ENCODE measurements at regions of chr18 and their contacts with region 1.

Region 1: DNA sequence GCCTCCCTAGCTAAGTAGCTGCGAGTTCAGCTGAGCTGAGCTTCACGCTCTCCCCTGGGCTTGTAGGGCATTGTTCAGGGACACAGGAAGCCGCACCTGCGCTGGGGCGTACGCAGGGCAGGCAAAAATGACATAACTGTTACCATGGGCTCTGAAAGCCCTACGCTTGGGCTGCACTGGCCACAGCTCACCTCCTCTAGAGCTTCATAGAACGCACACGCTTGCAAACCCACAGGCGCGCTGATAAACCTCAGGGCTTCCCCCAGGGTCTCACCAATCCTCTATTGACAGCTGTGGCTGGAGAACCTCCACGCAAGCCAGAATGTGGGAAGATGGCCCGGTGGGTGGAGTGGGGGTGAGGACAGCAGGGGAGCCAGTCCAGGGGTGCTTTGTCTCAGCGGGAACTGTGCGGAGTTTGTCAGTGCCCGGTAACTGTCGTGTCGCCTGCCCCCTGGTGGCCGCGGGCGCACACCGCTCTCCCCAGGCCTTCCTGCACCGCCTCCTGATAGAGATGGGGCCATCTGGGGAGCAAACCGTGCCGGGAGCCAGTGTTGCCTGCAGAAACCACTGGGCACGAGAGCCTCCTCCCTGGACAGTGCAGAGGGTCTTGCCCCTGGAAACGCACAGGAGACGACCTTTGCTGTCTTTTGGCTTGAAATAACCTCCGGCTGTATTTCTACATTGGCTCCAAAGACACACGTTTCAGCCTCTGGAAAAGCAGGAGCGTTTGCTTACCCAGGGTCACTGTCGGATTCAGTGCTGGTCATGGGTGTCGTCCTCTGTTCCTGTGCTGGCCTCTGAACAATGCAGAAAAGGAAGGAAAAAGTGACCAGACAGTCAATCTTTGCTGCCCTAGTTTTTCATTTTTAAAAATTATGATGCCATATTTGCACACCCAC is 17.0 kb upstream of the CIDEA start:
- DNase-seq: no peak
- H3K4me3 ChIP-seq: no peak overlapping the region
- CTCF ChIP-seq: peak; percentile 97

Region 2: DNA sequence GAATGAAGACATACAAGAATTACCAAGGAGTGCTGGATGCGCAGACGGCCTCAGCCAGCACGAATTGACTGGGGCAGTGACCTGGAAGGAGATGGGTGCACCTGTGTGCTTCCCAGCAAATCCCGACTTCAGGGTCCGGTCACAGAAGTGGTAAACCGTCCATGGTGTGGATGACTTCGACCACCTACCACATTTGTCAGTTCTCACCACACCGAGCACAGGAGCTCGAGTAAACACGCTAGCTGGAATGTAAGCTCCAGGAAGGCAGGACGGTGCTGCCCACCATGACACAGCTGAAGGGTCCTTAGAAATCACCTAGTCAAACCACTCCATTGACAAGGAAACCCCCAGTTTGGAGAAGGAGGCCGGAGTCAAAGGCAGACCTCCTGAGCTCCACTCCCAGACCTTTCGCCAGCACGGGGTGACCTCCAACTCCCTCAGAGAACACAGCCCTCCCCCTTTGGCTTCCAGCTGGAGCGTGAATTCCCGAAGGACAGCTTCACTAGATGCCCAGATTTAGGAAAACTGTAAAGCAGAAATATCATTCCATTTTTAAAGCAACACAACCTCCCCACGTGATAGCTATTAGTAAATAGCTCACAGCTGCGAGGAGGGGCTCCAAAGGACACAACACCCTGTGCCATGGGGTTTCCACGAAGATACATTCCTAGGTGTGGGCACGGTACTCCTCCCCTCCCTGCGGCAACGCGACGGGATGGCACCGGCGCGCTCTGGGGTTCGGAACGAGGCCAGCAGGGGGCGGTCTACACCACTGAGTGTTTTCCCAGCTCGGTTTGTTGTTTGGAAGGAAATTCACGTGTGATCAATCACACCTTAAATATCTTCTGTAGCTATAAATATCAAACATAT is 582.2 kb before region 1 on chr18:
- CTCF ChIA-PET with region 1: interaction called, 10 read pairs
- POLR2A ChIA-PET with region 1: no interaction called
- DNase-seq: no peak
- H3K4me3 ChIP-seq: no peak overlapping the region
- CTCF ChIP-seq: peak; percentile 80

Region 3: DNA sequence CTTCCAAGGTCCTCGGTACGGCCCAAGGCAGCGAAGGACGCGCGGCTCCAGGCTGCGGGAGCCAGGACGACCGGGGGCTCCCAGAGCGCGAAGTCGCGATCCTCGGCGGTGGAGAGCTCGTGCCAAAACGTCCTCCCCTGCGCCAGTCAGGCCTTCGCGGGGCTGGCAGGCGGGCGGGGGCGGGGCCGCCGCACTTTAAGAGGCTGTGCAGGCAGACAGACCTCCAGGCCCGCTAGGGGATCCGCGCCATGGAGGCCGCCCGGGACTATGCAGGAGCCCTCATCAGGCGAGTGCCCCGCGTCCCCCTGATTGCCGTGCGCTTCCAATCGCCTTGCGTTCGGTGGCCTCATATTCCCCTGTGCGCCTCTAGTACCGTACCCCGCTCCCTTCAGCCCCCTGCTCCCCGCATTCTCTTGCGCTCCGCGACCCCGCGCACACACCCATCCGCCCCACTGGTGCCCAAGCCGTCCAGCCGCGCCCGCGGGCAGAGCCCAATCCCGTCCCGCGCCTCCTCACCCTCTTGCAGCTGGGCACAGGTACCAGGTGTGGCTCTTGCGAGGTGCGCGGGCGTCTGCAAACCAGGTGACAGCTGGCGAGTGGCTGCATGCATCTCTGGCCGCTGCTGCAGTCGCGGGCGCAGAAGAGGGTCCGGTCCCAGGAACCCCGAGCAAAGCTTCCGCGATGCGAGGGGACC is 17.1 kb after region 1 on chr18 and contains the start of gene CIDEA:
- CTCF ChIA-PET with region 1: interaction called, 17 read pairs
- POLR2A ChIA-PET with region 1: no interaction called
- DNase-seq: no peak
- H3K4me3 ChIP-seq: peak within 1 kb of the TSS; percentile 42
- CTCF ChIP-seq: no peak

Region 4: GRCh38 chr18:12391618-12392165 is 154.5 kb after region 1 on chr18:
- CTCF ChIA-PET with region 1: no interaction called
- POLR2A ChIA-PET with region 1: no interaction called
- DNase-seq: no peak
- H3K4me3 ChIP-seq: no peak overlapping the region
- CTCF ChIP-seq: peak; percentile 79

Region 5: DNA sequence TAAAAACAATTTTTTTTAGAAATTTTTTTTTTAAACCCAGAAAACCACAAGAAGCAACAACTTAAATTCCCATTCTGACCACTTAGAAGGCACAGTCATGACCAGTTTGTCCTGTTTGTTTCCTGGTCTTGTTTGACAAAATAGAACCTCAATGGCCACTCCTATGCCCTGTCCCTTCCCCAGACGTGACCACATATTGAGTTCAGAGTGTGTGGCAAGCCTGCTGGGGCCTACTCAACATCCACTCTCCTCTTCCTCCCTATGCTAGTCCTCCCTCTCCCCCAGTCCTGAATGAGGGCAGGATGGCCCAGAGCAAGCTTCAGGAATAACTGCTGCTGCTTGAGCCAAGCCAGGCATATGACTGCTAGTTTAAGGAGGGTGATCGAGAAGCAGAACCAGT is 260.1 kb after region 1 on chr18:
- CTCF ChIA-PET with region 1: no interaction called
- POLR2A ChIA-PET with region 1: no interaction called
- DNase-seq: no peak
- H3K4me3 ChIP-seq: no peak overlapping the region
- CTCF ChIP-seq: no peak